Activated CD8-positive, alpha-beta memory T cell treated with anti-CD3 and anti-CD28 coated beads, Interleukin-2, amount 10 ng/mL, durations not matched to agents 7 days and 5 days (primary cell): ENCODE measurements at regions of chr2 and their contacts with region 1.

Region 1: GRCh38 chr2:203740780-203741281 is 34.4 kb downstream of the CD28 start:
- DNase-seq: peak; percentile 61
- ATAC-seq: peak; percentile 72
- H3K4me3 Mint-ChIP-seq: peak overlapping the region; percentile 47
- H3K27ac Mint-ChIP-seq: peak overlapping the region; percentile 96
- H3K4me1 Mint-ChIP-seq: peaks cover 76% of the 10 kb centered on the region
- H3K27me3 Mint-ChIP-seq: no peaks in the 10 kb centered on the region

Region 2: GRCh38 chr2:203730076-203730729 is 10.6 kb before region 1 on chr2:
- CTCF ChIA-PET with region 1: interaction called, 25 read pairs
- DNase-seq: no peak
- ATAC-seq: peak; percentile 79
- H3K4me3 Mint-ChIP-seq: peak overlapping the region; percentile 27
- H3K27ac Mint-ChIP-seq: peak overlapping the region; percentile 88
- H3K4me1 Mint-ChIP-seq: peaks cover 81% of the 10 kb centered on the region
- H3K27me3 Mint-ChIP-seq: no peaks in the 10 kb centered on the region

Region 3: GRCh38 chr2:203949228-203949627 is 208.4 kb after region 1 on chr2:
- CTCF ChIA-PET with region 1: no interaction called
- DNase-seq: peak; percentile 63
- ATAC-seq: peak; percentile 62
- H3K4me3 Mint-ChIP-seq: peak overlapping the region; percentile 29
- H3K27ac Mint-ChIP-seq: peak overlapping the region; percentile 81
- H3K4me1 Mint-ChIP-seq: peaks cover 73% of the 10 kb centered on the region
- H3K27me3 Mint-ChIP-seq: no peaks in the 10 kb centered on the region